ENCODE measurements at regions of chr4 and their contacts with region 1.

Region 1: GRCh38 chr4:2241410-2242353 is at the starts of genes HAUS3 and POLN:
- DNase-seq: peak; percentile 99 to 100
- ATAC-seq: peak; percentile 92 to 99 (median 95)
- H3K4me3 ChIP-seq: peak within 1 kb of the TSS; percentile 95
- H3K4me3 Mint-ChIP-seq: peak within 1 kb of the TSS; percentile 93
- H3K27ac ChIP-seq: peak within 1 kb of the TSS; percentile 66
- H3K27ac Mint-ChIP-seq: peak within 1 kb of the TSS; percentile 90 to 91
- H3K4me1 ChIP-seq: peaks cover 21% of the 10 kb centered on the region
- H3K4me1 Mint-ChIP-seq: peaks cover 46 to 64% of the 10 kb centered on the region in 2 donors
- H3K27me3 ChIP-seq: no peaks in the 10 kb centered on the region
- H3K27me3 Mint-ChIP-seq: no peaks in the 10 kb centered on the region
- CTCF ChIP-seq: no peak
- total RNA-seq, gene HAUS3: 38.0 to 50.3 (median 49.4) TPM
- total RNA-seq, gene POLN: 2.6 to 6.9 (median 3.3) TPM

Region 2: GRCh38 chr4:2262143-2262943 is 20.7 kb after region 1 on chr4:
- intact Hi-C with region 1: loop called (anchors 1 kb)
- DNase-seq: peak; percentile 98
- ATAC-seq: peak; percentile 86 to 95 (median 86)
- H3K4me3 ChIP-seq: peak overlapping the region; percentile 82
- H3K4me3 Mint-ChIP-seq: peak overlapping the region; percentile 89
- H3K27ac ChIP-seq: peak overlapping the region; percentile 99
- H3K27ac Mint-ChIP-seq: peak overlapping the region; percentile 73 to 89
- H3K4me1 ChIP-seq: peaks cover 39% of the 10 kb centered on the region
- H3K4me1 Mint-ChIP-seq: peaks cover 0 to 5% of the 10 kb centered on the region in 2 donors
- H3K27me3 ChIP-seq: no peaks in the 10 kb centered on the region
- H3K27me3 Mint-ChIP-seq: no peaks in the 10 kb centered on the region
- CTCF ChIP-seq: no peak

Region 3: GRCh38 chr4:2281575-2282343 is 40.1 kb after region 1 on chr4:
- intact Hi-C with region 1: loop called (anchors 5 kb)
- DNase-seq: peak; percentile 79 to 97
- ATAC-seq: peak; percentile 85 to 94 (median 87)
- H3K4me3 ChIP-seq: no peak overlapping the region
- H3K4me3 Mint-ChIP-seq: peak overlapping the region; percentile 76
- H3K27ac ChIP-seq: peak overlapping the region; percentile 89
- H3K27ac Mint-ChIP-seq: peak overlapping the region; percentile 95 to 97
- H3K4me1 ChIP-seq: peaks cover 33% of the 10 kb centered on the region
- H3K4me1 Mint-ChIP-seq: peaks cover 27 to 46% of the 10 kb centered on the region in 2 donors
- H3K27me3 ChIP-seq: no peaks in the 10 kb centered on the region
- H3K27me3 Mint-ChIP-seq: no peaks in the 10 kb centered on the region
- CTCF ChIP-seq: peak; percentile 27

Region 4: GRCh38 chr4:2418650-2419571 is 177.2 kb after region 1 on chr4 and contains the start of gene CFAP99:
- intact Hi-C with region 1: loop called (anchors 1 kb)
- DNase-seq: peak; percentile 91 to 99
- ATAC-seq: peak; percentile 85 to 97 (median 89)
- H3K4me3 ChIP-seq: peak within 1 kb of the TSS; percentile 36
- H3K4me3 Mint-ChIP-seq: peak within 1 kb of the TSS; percentile 92
- H3K27ac ChIP-seq: peak within 1 kb of the TSS; percentile 78
- H3K27ac Mint-ChIP-seq: peak within 1 kb of the TSS; percentile 87 to 88
- H3K4me1 ChIP-seq: peaks cover 41% of the 10 kb centered on the region
- H3K4me1 Mint-ChIP-seq: peaks cover 41 to 48% of the 10 kb centered on the region in 2 donors
- H3K27me3 ChIP-seq: peaks cover 25% of the 10 kb centered on the region
- H3K27me3 Mint-ChIP-seq: peaks cover 16 to 20% of the 10 kb centered on the region in 2 donors
- CTCF ChIP-seq: peak; percentile 26
- total RNA-seq, gene CFAP99: not detected

Region 5: GRCh38 chr4:2536193-2537010 is 294.7 kb after region 1 on chr4 and contains the start of gene FAM193A:
- intact Hi-C with region 1: loop called (anchors 5 kb)
- DNase-seq: peak; percentile 97 to 99
- ATAC-seq: peak; percentile 93 to 98 (median 93)
- H3K4me3 ChIP-seq: peak within 1 kb of the TSS; percentile 57
- H3K4me3 Mint-ChIP-seq: peak within 1 kb of the TSS; percentile 88
- H3K27ac ChIP-seq: peak within 1 kb of the TSS; percentile 71
- H3K27ac Mint-ChIP-seq: peak within 1 kb of the TSS; percentile 83 to 89
- H3K4me1 ChIP-seq: peaks cover 27% of the 10 kb centered on the region
- H3K4me1 Mint-ChIP-seq: peaks cover 10 to 14% of the 10 kb centered on the region in 2 donors
- H3K27me3 ChIP-seq: no peaks in the 10 kb centered on the region
- H3K27me3 Mint-ChIP-seq: no peaks in the 10 kb centered on the region
- CTCF ChIP-seq: no peak
- total RNA-seq, gene FAM193A: 39.4 to 49.3 (median 48.1) TPM